PC-9 (cell line): ENCODE measurements at regions of chr6 and their contacts with region 1.

Region 1: GRCh38 chr6:10873313-10873712 is 8.5 kb downstream of the GCM2 start:
- DNase-seq: peak in 1 of 2 experiments; percentile 88
- H3K4me3 ChIP-seq: peak overlapping the region; percentile 42; the same call in 1 of the 2 replicates
- H3K27ac ChIP-seq: peak overlapping the region; percentile 88
- H3K4me1 ChIP-seq: peaks cover 34% of the 10 kb centered on the region
- H3K27me3 ChIP-seq: no peaks in the 10 kb centered on the region
- CTCF ChIP-seq: no peak

Region 2: DNA sequence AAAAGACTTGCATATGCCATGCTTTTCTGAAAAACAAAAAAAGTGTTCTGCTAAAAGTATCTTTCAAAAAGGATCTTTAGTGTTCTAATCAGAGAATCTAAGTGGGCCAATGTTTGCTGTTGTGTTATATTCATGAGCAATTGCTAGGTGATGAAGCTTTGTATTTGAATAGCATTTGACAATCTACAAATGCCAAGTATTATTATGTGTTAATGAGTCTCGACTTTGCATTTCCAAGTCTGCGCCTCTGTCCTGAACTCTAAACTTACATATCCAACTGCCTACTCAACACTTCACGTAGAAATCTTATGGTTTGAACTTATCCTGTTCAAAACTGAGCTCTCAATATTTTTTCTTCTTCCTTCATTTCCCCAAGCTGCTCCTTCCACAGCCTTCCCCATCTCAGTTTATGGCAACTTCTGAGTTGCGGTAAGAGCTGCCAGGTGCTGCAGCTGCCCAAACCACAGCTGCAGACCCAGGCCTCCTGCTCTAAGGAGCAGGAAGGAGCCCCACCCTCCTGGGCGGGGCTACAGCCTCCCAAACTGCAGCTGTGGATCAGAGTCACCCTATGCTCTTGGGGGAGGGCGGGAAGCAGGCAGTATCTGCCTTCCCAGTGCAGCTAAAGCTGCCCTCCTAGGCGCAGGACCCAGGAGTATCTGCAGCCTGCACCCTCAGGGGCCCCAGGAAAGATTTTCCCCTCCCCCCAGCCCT is 18.2 kb before region 1 on chr6:
- CTCF ChIA-PET with region 1: no interaction called
- POLR2A ChIA-PET with region 1: interaction called, 11 read pairs
- intact Hi-C with region 1: no loop called
- DNase-seq: no peak
- H3K4me3 ChIP-seq: no peak overlapping the region
- H3K27ac ChIP-seq: no peak overlapping the region
- H3K4me1 ChIP-seq: no peaks in the 10 kb centered on the region
- H3K27me3 ChIP-seq: no peaks in the 10 kb centered on the region
- CTCF ChIP-seq: no peak

Region 3: DNA sequence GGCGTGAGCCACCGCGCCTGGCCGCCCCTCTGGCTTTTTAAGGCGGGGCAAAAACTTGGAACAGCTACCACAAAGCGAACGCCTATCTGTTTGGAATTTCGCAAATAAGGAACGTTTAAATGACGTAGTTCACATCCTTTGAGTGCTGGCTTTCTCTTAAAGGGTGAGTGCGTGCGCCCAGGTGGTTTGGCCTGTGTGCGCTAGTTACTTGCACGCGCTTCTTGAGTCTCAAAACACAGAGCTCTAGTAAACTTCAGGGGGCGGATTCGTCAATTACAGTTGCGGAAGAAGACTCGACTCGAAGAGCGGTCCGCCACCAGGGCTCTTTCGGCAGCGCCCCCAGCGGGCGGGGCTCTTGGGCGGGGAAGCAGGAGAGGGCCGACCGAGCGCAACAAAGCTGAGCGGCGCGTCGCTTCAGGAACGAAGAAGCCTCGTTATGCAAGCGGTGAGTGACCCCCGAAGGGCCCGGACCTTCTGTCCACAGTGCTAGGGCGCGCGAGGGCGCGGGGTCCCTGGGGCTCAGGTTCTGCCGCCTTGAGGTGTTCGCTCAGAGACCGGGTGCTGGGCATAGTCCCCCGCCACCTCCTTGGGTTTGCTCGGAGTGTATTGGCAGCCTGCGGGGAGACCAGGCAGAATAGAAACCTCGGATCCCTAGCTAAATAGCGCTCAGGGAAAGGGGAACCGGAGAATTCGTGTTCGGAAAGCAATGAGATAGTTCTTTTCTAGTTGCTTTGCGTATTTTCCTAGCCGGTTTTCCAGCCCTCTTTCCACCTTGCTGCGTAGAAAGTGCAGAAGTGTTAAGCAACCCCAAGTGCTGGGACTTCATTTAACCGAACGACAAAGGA is 13.6 kb after region 1 on chr6 and contains the start of gene SYCP2L:
- CTCF ChIA-PET with region 1: interaction called, 7 read pairs
- POLR2A ChIA-PET with region 1: interaction called, 15 read pairs
- intact Hi-C with region 1: no loop called
- DNase-seq: peak; percentile 80 to 90
- H3K4me3 ChIP-seq: peak within 1 kb of the TSS; percentile 81
- H3K27ac ChIP-seq: peak within 1 kb of the TSS; percentile 81
- H3K4me1 ChIP-seq: peaks cover 11% of the 10 kb centered on the region; the same call in 1 of the 2 replicates
- H3K27me3 ChIP-seq: no peaks in the 10 kb centered on the region
- CTCF ChIP-seq: peak; percentile 41; the same call in 1 of the 2 replicates
- total RNA-seq, gene SYCP2L: 12.6 and 15.7 TPM in 2 replicates

Region 4: DNA sequence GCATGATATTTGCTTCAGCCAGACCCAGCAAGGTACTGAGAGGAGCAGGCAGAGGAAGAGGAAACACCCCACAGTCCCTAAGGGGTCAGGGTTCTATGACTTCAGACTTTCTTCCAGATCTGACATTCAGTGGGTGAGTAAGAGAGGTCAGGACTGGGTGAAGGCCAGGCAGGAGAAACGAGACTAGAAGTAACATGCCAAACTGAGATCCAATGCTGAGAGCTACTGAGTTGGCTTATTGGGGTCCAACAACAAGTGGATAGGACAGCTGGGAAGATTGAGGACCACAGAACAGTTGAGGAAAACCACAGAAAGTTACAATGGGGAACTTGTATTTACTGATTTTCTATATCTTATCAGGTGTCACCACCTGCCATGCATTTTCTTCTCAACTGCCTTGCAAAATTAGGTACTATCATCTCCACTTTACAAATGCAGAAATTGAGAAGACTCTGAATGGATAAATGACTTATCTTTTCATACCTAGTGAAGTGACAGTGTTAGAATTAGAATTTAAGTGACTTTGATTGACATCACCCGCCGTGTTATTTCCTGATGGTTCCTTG is 1095.0 kb after region 1 on chr6:
- CTCF ChIA-PET with region 1: no interaction called
- POLR2A ChIA-PET with region 1: no interaction called
- intact Hi-C with region 1: no loop called
- DNase-seq: no peak
- H3K4me3 ChIP-seq: no peak overlapping the region
- H3K27ac ChIP-seq: no peak overlapping the region
- H3K4me1 ChIP-seq: no peaks in the 10 kb centered on the region
- H3K27me3 ChIP-seq: no peaks in the 10 kb centered on the region
- CTCF ChIP-seq: no peak